K562 (cell line): ENCODE measurements at regions of chr3 and their contacts with region 1.

Region 1: DNA sequence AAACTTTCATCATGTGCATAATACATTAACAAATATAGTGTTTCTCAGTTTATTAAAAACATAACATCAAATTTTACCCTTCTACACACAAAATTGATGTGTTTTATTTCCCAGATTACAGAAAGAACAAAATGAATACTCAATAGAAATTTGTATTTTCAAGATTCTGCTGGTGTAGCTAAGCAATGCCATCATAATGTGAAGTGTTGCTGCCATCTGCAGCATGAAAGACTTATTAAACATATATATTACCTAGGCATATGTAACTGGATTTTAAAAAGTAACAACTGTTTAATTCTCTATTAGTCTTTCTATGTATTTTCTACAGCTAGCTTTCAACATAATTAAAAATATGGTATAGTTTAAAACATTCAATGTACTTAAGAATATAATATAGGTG is 27.5 kb downstream of the PLSCR5 start:
- DNase-seq: peak in 2 of 4 experiments; percentile 7 to 62
- ATAC-seq: peak; percentile 85
- H3K4me3 ChIP-seq: no peak overlapping the region
- H3K27ac ChIP-seq: no peak overlapping the region
- H3K4me1 ChIP-seq: no peaks in the 10 kb centered on the region
- H3K27me3 ChIP-seq: no peaks in the 10 kb centered on the region
- CTCF ChIP-seq: peak in 2 of 3 experiments; percentile 27 to 78; a peak in 3 of 6 replicates
- EP300 ChIP-seq: no peak
- POLR2A ChIP-seq: no peak
- RAD21 ChIP-seq: peak; percentile 95 to 96

Region 2: GRCh38 chr3:146065573-146066006 is 512.1 kb before region 1 on chr3:
- CTCF ChIA-PET with region 1: no interaction called
- POLR2A ChIA-PET with region 1: no interaction called
- in situ Hi-C with region 1: loop called (anchors 25 kb)
- intact Hi-C with region 1: loop called (anchors 5 kb)
- DNase-seq: peak in 2 of 4 experiments; percentile 8 to 53
- ATAC-seq: no peak
- H3K4me3 ChIP-seq: no peak overlapping the region
- H3K27ac ChIP-seq: no peak overlapping the region
- H3K4me1 ChIP-seq: no peaks in the 10 kb centered on the region
- H3K27me3 ChIP-seq: no peaks in the 10 kb centered on the region
- CTCF ChIP-seq: peak; percentile 28 to 62 (median 31); a peak in 3 of 6 replicates
- EP300 ChIP-seq: no peak
- POLR2A ChIP-seq: no peak
- RAD21 ChIP-seq: peak; percentile 60 to 75

Region 3: GRCh38 chr3:146189519-146190173 is 388.0 kb before region 1 on chr3:
- CTCF ChIA-PET with region 1: interaction called, 14 read pairs
- POLR2A ChIA-PET with region 1: no interaction called
- in situ Hi-C with region 1: no loop called
- intact Hi-C with region 1: loop called (anchors 1 kb)
- DNase-seq: peak; percentile 32 to 52 (median 37)
- ATAC-seq: peak; percentile 90
- H3K4me3 ChIP-seq: no peak overlapping the region
- H3K27ac ChIP-seq: no peak overlapping the region
- H3K4me1 ChIP-seq: no peaks in the 10 kb centered on the region
- H3K27me3 ChIP-seq: no peaks in the 10 kb centered on the region
- CTCF ChIP-seq: peak; percentile 46 to 65 (median 64)
- EP300 ChIP-seq: no peak
- POLR2A ChIP-seq: no peak
- RAD21 ChIP-seq: peak; percentile 65 to 73

Region 4: DNA sequence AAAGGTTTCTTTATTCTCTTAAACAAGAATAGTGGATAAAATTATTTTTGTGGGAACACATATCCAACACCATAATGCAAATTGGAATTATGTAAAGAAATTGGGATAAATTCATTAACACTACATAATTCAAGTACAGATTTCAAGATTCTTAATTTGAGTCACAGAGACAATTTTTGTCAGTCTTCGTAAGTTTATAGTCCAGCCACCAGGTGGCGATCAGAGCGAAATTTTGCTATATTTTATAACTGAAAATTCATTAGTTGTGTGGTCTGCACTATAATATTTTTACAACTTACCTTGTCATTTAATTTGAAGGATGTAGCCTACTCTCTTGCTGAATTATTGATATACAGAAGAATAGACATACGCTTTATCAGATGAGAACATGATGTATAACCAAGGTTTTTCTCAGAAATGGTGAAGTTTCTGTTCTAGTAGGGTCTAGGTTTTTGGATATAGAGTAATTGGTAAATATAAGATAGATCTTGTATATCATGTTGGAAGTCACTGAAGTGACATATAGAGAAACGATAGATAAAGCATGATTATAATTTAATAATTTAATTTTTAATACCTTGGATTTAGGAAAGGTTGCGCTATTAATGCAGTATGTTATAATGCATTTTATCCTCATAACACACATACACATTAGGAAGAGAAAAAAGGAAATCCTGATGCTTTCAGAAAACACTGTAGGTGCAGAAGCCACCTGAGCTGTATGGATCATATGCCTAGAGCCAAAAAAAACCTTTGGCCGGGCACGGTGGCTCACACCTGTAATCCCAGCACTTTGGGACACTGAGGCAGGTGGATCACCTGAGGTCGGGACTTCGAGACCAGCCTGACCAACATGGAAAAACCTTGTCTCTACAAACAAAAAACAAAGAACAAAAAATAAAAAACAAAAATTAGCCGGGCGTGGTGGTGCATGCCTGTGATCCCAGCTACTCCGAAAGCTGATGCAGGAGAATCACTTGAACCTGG is 358.5 kb before region 1 on chr3:
- CTCF ChIA-PET with region 1: interaction called, 13 read pairs
- POLR2A ChIA-PET with region 1: no interaction called
- in situ Hi-C with region 1: no loop called
- intact Hi-C with region 1: loop called (anchors 1 kb)
- DNase-seq: peak; percentile 8 to 32 (median 15)
- ATAC-seq: no peak
- H3K4me3 ChIP-seq: no peak overlapping the region
- H3K27ac ChIP-seq: no peak overlapping the region
- H3K4me1 ChIP-seq: no peaks in the 10 kb centered on the region
- H3K27me3 ChIP-seq: no peaks in the 10 kb centered on the region
- CTCF ChIP-seq: peak; percentile 40 to 64 (median 49); a peak in 4 of 6 replicates
- EP300 ChIP-seq: no peak
- POLR2A ChIP-seq: no peak
- RAD21 ChIP-seq: peak; percentile 67 to 73

Region 5: GRCh38 chr3:146326670-146327543 is 250.8 kb before region 1 on chr3:
- CTCF ChIA-PET with region 1: interaction called, 4 read pairs
- POLR2A ChIA-PET with region 1: no interaction called
- in situ Hi-C with region 1: loop called (anchors 25 kb)
- intact Hi-C with region 1: no loop called
- DNase-seq: peak in 1 of 4 experiments; percentile 8
- ATAC-seq: peak; percentile 70; the same call in 2 of the 3 replicates
- H3K4me3 ChIP-seq: no peak overlapping the region
- H3K27ac ChIP-seq: no peak overlapping the region
- H3K4me1 ChIP-seq: no peaks in the 10 kb centered on the region
- H3K27me3 ChIP-seq: no peaks in the 10 kb centered on the region
- CTCF ChIP-seq: peak; percentile 19 to 47 (median 24); a peak in 3 of 6 replicates
- EP300 ChIP-seq: no peak
- POLR2A ChIP-seq: no peak
- RAD21 ChIP-seq: peak; percentile 59 to 69

Region 6: GRCh38 chr3:146334151-146334550 is 243.5 kb before region 1 on chr3:
- CTCF ChIA-PET with region 1: interaction called, 6 read pairs
- POLR2A ChIA-PET with region 1: no interaction called
- in situ Hi-C with region 1: loop called (anchors 25 kb)
- intact Hi-C with region 1: loop called (anchors 1 kb)
- DNase-seq: peak in 1 of 4 experiments; percentile 6
- ATAC-seq: no peak; the same call in 2 of the 3 replicates
- H3K4me3 ChIP-seq: no peak overlapping the region
- H3K27ac ChIP-seq: no peak overlapping the region
- H3K4me1 ChIP-seq: no peaks in the 10 kb centered on the region
- H3K27me3 ChIP-seq: no peaks in the 10 kb centered on the region
- CTCF ChIP-seq: peak; percentile 15 to 50 (median 30); a peak in 3 of 6 replicates
- EP300 ChIP-seq: no peak
- POLR2A ChIP-seq: no peak
- RAD21 ChIP-seq: peak; percentile 61 to 67

Region 7: DNA sequence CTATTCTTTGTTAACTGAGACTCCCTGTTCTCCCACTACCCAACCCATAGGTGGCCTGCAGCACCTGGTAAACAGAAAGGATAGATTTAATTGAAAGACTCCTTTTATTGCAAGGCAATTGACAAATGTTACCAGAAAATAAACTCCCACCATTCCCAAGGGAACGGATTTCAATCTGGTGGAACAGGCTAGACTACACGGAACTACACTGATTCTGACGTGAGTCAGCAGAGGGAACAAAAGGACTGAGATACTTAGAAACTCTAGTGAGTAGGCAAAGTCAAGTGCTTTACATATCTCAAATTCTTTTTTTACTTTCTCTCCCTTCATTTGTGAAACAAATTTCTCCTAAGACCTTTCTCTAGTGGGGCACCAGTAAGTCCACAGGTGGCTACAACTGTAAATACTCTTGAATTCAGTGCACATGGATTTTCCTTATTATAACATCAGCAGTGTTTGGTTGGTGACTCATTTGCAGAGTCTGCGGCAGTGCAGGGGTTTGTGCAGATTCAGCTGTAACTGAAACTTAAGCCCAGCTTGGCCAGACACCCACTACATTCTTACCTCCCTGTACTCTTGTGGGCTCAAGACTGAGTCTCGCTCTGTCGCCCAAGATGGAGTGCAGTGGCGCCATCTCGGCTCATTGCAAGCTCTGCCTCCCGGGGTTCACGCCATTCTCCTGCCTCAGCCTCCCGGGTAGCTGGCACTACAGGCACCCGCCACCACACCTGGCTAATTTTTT is 74.0 kb before region 1 on chr3:
- CTCF ChIA-PET with region 1: no interaction called
- POLR2A ChIA-PET with region 1: no interaction called
- in situ Hi-C with region 1: no loop called
- intact Hi-C with region 1: loop called (anchors 1 kb)
- DNase-seq: no peak
- ATAC-seq: peak; percentile 65
- H3K4me3 ChIP-seq: no peak overlapping the region
- H3K27ac ChIP-seq: no peak overlapping the region; the same call in 2 of the 3 replicates
- H3K4me1 ChIP-seq: peaks cover 5 to 30% of the 10 kb centered on the region in 2 experiments; a peak in 4 of 5 replicates
- H3K27me3 ChIP-seq: no peaks in the 10 kb centered on the region
- CTCF ChIP-seq: no peak
- EP300 ChIP-seq: no peak
- POLR2A ChIP-seq: no peak
- RAD21 ChIP-seq: 0 out of 4 replicates have a peak, but pooled peaks of 1 of the 2 experiments have one; percentile 5

Region 8: GRCh38 chr3:146561879-146562278 is 15.8 kb before region 1 on chr3:
- CTCF ChIA-PET with region 1: no interaction called
- POLR2A ChIA-PET with region 1: no interaction called
- in situ Hi-C with region 1: no loop called
- intact Hi-C with region 1: no loop called
- DNase-seq: no peak
- ATAC-seq: peak; percentile 79
- H3K4me3 ChIP-seq: no peak overlapping the region
- H3K27ac ChIP-seq: no peak overlapping the region
- H3K4me1 ChIP-seq: no peaks in the 10 kb centered on the region; a peak in 1 of 5 replicates
- H3K27me3 ChIP-seq: no peaks in the 10 kb centered on the region
- CTCF ChIP-seq: no peak
- EP300 ChIP-seq: no peak
- POLR2A ChIP-seq: no peak
- RAD21 ChIP-seq: no peak

Region 9: DNA sequence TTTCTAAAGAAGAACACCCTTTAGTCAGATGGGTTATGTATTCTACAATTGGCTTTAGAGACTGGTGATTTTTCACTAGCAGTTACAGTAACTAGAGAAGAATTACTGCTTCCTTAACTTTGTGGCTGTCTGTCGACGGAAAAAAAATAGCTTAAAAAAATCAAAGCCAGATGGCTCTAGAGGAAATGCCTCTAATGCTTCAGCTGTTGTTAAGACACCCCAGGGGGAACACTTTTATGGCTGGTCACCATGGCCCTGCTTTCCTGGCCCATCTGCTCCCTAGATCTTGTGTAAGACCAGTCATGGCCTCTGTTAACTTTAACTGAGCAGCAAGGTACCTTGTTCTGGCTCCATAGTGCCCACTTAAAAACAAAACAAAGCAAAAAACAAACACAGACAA is 226.1 kb after region 1 on chr3:
- CTCF ChIA-PET with region 1: no interaction called
- POLR2A ChIA-PET with region 1: no interaction called
- in situ Hi-C with region 1: no loop called
- intact Hi-C with region 1: no loop called
- DNase-seq: no peak
- ATAC-seq: no peak
- H3K4me3 ChIP-seq: no peak overlapping the region
- H3K27ac ChIP-seq: no peak overlapping the region
- H3K4me1 ChIP-seq: no peaks in the 10 kb centered on the region
- H3K27me3 ChIP-seq: no peaks in the 10 kb centered on the region
- CTCF ChIP-seq: no peak
- EP300 ChIP-seq: no peak
- POLR2A ChIP-seq: no peak
- RAD21 ChIP-seq: no peak